ENCODE measurements at regions of chr9 and their contacts with region 1.

Region 1: GRCh38 chr9:36023260-36024048 is 13.3 kb upstream of the RECK start:
- DNase-seq: peak in 2 of 3 donors; percentile 70 to 88
- ATAC-seq: peak; percentile 93
- H3K4me3 ChIP-seq: no peak overlapping the region
- H3K4me1 ChIP-seq: no peaks in the 10 kb centered on the region
- CTCF ChIP-seq: peak; percentile 79

Region 2: DNA sequence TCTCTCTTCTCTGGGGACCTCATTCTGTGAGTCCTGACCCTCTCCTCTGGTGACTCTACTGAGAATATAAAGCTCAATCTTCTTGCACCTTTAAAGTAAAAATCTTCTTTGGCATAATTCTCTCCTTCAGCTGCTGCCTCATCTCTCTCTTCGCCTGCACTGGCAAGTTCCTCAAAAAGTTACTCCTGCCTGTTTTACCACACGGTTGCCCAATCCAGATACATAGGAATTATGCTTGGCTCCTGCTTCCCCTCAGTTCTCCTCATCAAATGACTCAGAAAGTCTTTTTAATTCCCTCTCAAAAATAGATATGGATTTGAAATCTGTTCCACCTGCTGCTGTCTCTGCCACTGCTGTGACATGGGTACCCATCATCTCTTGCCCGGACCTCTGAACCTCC is 131.8 kb before region 1 on chr9:
- intact Hi-C with region 1: loop called (anchors 10 kb)
- DNase-seq: no peak
- ATAC-seq: no peak
- H3K4me3 ChIP-seq: no peak overlapping the region
- H3K4me1 ChIP-seq: no peaks in the 10 kb centered on the region
- CTCF ChIP-seq: no peak

Region 3: GRCh38 chr9:35954942-35955546 is 68.4 kb before region 1 on chr9:
- intact Hi-C with region 1: loop called (anchors 1 to 10 kb)
- DNase-seq: peak in 1 of 3 donors; percentile 78
- ATAC-seq: peak; percentile 93
- H3K4me3 ChIP-seq: no peak overlapping the region
- H3K4me1 ChIP-seq: peaks cover 6% of the 10 kb centered on the region
- CTCF ChIP-seq: peak; percentile 64

Region 4: GRCh38 chr9:36154331-36154952 is 131.0 kb after region 1 on chr9:
- intact Hi-C with region 1: no loop called
- DNase-seq: no peak
- ATAC-seq: no peak
- H3K4me3 ChIP-seq: no peak overlapping the region
- H3K4me1 ChIP-seq: peaks cover 16% of the 10 kb centered on the region
- CTCF ChIP-seq: no peak

Measured in mucosa of descending colon (tissue), 3 donors.